T-cell (primary cell): ENCODE measurements at regions of chr3 and their contacts with region 1.

Region 1: GRCh38 chr3:160343132-160343531 is 55.9 kb downstream of the IFT80 start:
- DNase-seq: peak in 1 of 35 experiments; percentile 20
- ATAC-seq: no peak
- H3K4me3 ChIP-seq: no peak overlapping the region
- H3K4me3 Mint-ChIP-seq: no peak overlapping the region
- H3K27ac ChIP-seq: no peak overlapping the region
- H3K27ac Mint-ChIP-seq: no peak overlapping the region
- H3K4me1 ChIP-seq: no peaks in the 10 kb centered on the region
- H3K4me1 Mint-ChIP-seq: no peaks in the 10 kb centered on the region
- H3K27me3 ChIP-seq: no peaks in the 10 kb centered on the region
- H3K27me3 Mint-ChIP-seq: no peaks in the 10 kb centered on the region

Region 2: DNA sequence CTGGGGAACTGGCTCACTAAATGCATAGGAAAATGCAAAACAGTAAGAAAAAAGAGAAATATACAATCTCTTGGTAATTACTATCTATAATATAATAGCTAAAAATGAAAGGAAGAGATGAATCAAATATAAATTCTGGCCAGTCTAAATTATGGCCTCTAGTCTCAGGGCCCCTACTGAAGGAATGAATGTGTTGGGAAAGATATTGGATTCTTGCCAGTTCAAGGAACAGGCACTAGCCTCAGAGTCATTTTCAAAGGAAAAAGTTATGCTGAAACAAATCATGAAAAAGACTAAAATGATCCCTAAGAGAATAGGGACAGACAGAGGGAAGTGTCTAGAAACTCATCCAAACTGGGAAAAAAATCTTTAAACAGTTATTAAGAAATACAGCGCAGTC is 55.5 kb before region 1 on chr3:
- CTCF ChIA-PET with region 1: no interaction called
- POLR2A ChIA-PET with region 1: no interaction called
- DNase-seq: no peak
- ATAC-seq: no peak
- H3K4me3 ChIP-seq: no peak overlapping the region
- H3K4me3 Mint-ChIP-seq: no peak overlapping the region
- H3K27ac ChIP-seq: no peak overlapping the region
- H3K27ac Mint-ChIP-seq: no peak overlapping the region
- H3K4me1 ChIP-seq: no peaks in the 10 kb centered on the region
- H3K4me1 Mint-ChIP-seq: no peaks in the 10 kb centered on the region
- H3K27me3 ChIP-seq: no peaks in the 10 kb centered on the region
- H3K27me3 Mint-ChIP-seq: no peaks in the 10 kb centered on the region

Region 3: GRCh38 chr3:160435095-160435494 is 92.0 kb after region 1 on chr3:
- CTCF ChIA-PET with region 1: no interaction called
- POLR2A ChIA-PET with region 1: interaction called in 1 of 2 experiments, 17 read pairs
- DNase-seq: no peak
- ATAC-seq: no peak
- H3K4me3 ChIP-seq: no peak overlapping the region
- H3K4me3 Mint-ChIP-seq: no peak overlapping the region
- H3K27ac ChIP-seq: no peak overlapping the region
- H3K27ac Mint-ChIP-seq: no peak overlapping the region
- H3K4me1 ChIP-seq: peaks cover 7 to 14% of the 10 kb centered on the region in 2 experiments
- H3K4me1 Mint-ChIP-seq: peaks cover 40 to 44% (median 43%) of the 10 kb centered on the region in 3 donors
- H3K27me3 ChIP-seq: no peaks in the 10 kb centered on the region
- H3K27me3 Mint-ChIP-seq: no peaks in the 10 kb centered on the region